Sigmoid colon (tissue), 7 donors: ENCODE measurements at regions of chr5 and their contacts with region 1.

Region 1: GRCh38 chr5:77775790-77776553 is at the start of gene TBCA:
- DNase-seq: peak; percentile 93
- H3K4me3 ChIP-seq: peak within 1 kb of the TSS; percentile 56 to 75 (median 71)
- H3K27ac ChIP-seq: peak within 1 kb of the TSS; percentile 94 to 98 (median 96)
- H3K4me1 ChIP-seq: peaks cover 0 to 49% (median 38%) of the 10 kb centered on the region in 4 donors
- H3K27me3 ChIP-seq: no peaks in the 10 kb centered on the region
- CTCF ChIP-seq: peak in 2 of 4 experiments; percentile 20 to 26
- EP300 ChIP-seq: no peak
- POLR2A ChIP-seq: peak; percentile 77 to 80
- total RNA-seq, gene TBCA: 192 to 231 (median 214) TPM

Region 2: GRCh38 chr5:77806213-77806843 is 30.4 kb after region 1 on chr5:
- intact Hi-C with region 1: no loop called
- DNase-seq: no peak
- H3K4me3 ChIP-seq: no peak overlapping the region
- H3K27ac ChIP-seq: no peak overlapping the region
- H3K4me1 ChIP-seq: no peaks in the 10 kb centered on the region
- H3K27me3 ChIP-seq: no peaks in the 10 kb centered on the region
- CTCF ChIP-seq: no peak
- EP300 ChIP-seq: no peak
- POLR2A ChIP-seq: no peak

Region 3: GRCh38 chr5:77852514-77853352 is 76.8 kb after region 1 on chr5:
- intact Hi-C with region 1: loop called (anchors 2 kb)
- DNase-seq: peak; percentile 77
- H3K4me3 ChIP-seq: peak overlapping the region; percentile 36 to 65 (median 58)
- H3K27ac ChIP-seq: peak overlapping the region in 2 of 4 donors; percentile 63 to 68
- H3K4me1 ChIP-seq: peaks cover 0 to 14% (median 4%) of the 10 kb centered on the region in 4 donors
- H3K27me3 ChIP-seq: no peaks in the 10 kb centered on the region
- CTCF ChIP-seq: no peak
- EP300 ChIP-seq: no peak
- POLR2A ChIP-seq: no peak